Activated CD4-positive, alpha-beta memory T cell treated with anti-CD3 and anti-CD28 coated beads for 36 hours (primary cell): ENCODE measurements at regions of chr6 and their contacts with region 1.

Region 1: GRCh38 chr6:27871924-27872638 is 40.1 kb downstream of the OR2B2 start:
- DNase-seq: peak; percentile 82
- H3K4me3 Mint-ChIP-seq: peak overlapping the region; percentile 81
- H3K27ac Mint-ChIP-seq: peak overlapping the region; percentile 99
- H3K4me1 Mint-ChIP-seq: peaks cover 30% of the 10 kb centered on the region
- H3K27me3 Mint-ChIP-seq: peaks cover 8% of the 10 kb centered on the region

Region 2: GRCh38 chr6:27650620-27651370 is 221.3 kb before region 1 on chr6:
- CTCF ChIA-PET with region 1: no interaction called
- POLR2A ChIA-PET with region 1: no interaction called
- intact Hi-C with region 1: no loop called
- DNase-seq: peak; percentile 74
- H3K4me3 Mint-ChIP-seq: no peak overlapping the region
- H3K27ac Mint-ChIP-seq: no peak overlapping the region
- H3K4me1 Mint-ChIP-seq: peaks cover 5% of the 10 kb centered on the region
- H3K27me3 Mint-ChIP-seq: peaks cover 50% of the 10 kb centered on the region

Region 3: DNA sequence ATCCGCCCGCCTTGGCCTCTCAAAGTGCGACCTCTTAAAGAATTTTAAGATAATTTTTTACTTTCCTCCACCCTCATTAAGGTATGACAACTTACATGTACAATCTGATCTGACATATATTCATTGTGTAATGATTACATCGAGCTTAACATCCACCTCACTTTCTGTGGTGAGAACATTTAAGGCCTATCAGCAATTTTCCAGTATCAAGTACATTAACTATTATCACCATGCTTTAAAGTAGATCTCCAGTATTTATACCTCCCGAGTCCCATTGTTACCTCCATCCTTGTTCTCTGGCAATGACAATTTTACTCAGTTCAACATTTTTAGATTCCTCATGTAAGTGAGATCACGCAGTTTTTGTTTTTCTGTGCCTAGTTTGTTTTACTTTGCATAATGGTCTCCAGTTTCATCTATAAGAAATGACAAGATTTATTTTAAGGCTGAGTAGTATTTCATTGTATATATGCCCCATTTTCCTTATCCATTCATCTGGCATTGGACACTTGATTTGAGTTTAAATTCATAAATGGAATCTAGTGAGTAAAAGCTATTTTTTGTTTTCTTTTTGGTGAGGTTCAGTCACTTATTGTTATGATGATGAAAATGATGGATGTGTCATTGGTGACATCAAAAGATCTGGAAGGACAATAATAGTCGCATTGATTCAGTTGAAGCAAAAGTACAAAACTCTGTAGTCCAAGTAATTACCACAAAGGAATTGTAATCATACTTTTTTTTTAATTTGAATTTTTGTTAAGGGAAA is 46.9 kb before region 1 on chr6:
- CTCF ChIA-PET with region 1: interaction called, 4 read pairs
- POLR2A ChIA-PET with region 1: interaction called, 102 read pairs
- intact Hi-C with region 1: loop called (anchors 1 kb)
- DNase-seq: no peak
- H3K4me3 Mint-ChIP-seq: peak overlapping the region; percentile 87
- H3K27ac Mint-ChIP-seq: peak overlapping the region; percentile 98
- H3K4me1 Mint-ChIP-seq: peaks cover 32% of the 10 kb centered on the region
- H3K27me3 Mint-ChIP-seq: no peaks in the 10 kb centered on the region

Region 4: DNA sequence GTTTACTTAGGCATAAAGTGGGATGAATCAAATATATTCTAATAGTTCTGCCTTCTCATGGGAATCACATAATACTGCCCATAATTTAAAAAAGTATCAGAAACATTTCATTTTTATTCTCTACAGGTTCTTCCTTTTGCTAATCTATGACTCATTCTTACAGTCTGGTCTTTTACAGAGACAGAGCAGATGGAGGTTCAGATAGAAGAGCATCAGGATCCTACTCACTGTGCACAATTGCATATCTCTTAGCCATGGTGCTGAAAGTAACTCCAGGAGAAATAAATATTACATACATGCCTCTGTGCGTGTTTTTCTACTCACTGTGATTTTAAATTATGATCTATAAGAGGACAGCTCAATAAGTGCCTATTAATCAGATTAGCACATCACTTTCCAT is 68.7 kb after region 1 on chr6:
- CTCF ChIA-PET with region 1: no interaction called
- POLR2A ChIA-PET with region 1: no interaction called
- intact Hi-C with region 1: no loop called
- DNase-seq: no peak
- H3K4me3 Mint-ChIP-seq: no peak overlapping the region
- H3K27ac Mint-ChIP-seq: no peak overlapping the region
- H3K4me1 Mint-ChIP-seq: no peaks in the 10 kb centered on the region
- H3K27me3 Mint-ChIP-seq: peaks cover 48% of the 10 kb centered on the region